ENCODE measurements at regions of chr12 and their contacts with region 1.

Region 1: GRCh38 chr12:53098982-53099651 is 1.6 kb downstream of the IGFBP6 start:
- DNase-seq: peak; percentile 73 to 89 (median 85)
- ATAC-seq: peak; percentile 88
- H3K4me3 ChIP-seq: no peak overlapping the region
- H3K4me3 Mint-ChIP-seq: peak overlapping the region; percentile 43 to 88 (median 80)
- H3K27ac ChIP-seq: no peak overlapping the region
- H3K27ac Mint-ChIP-seq: peak overlapping the region in 6 of 9 donors; percentile 8 to 73 (median 33)
- H3K4me1 ChIP-seq: peaks cover 41 to 46% of the 10 kb centered on the region in 2 donors
- H3K4me1 Mint-ChIP-seq: peaks cover 40 to 52% (median 48%) of the 10 kb centered on the region in 7 donors
- H3K27me3 ChIP-seq: no peaks in the 10 kb centered on the region
- H3K27me3 Mint-ChIP-seq: peaks cover 0 to 37% (median 0%) of the 10 kb centered on the region in 5 donors

Region 2: DNA sequence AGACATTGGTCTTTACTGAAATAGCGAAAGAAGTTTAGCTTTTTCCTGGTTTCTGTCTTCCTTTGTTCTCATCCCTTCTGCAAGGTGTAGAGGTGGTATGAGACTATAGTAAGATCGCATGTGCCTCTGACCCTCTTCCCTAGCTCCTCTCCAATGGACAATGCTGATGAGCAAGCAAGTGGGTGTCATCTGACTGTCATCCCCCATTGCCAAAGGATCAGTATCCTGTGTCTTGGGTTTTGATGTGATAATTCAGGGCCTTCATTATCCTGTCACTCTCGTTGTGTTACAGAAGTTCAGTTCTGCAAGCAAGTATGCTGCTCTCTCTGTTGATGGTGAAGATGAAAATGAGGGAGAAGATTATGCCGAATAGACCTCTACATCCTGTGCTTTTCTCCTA is 59.3 kb before region 1 on chr12:
- CTCF ChIA-PET with region 1: interaction called, 11 read pairs
- POLR2A ChIA-PET with region 1: no interaction called
- intact Hi-C with region 1: loop called in 1 of 2 experiments (anchors 1 kb)
- DNase-seq: no peak
- ATAC-seq: no peak
- H3K4me3 ChIP-seq: no peak overlapping the region
- H3K4me3 Mint-ChIP-seq: no peak overlapping the region
- H3K27ac ChIP-seq: peak overlapping the region; percentile 14
- H3K27ac Mint-ChIP-seq: peak overlapping the region in 4 of 9 donors; percentile 14 to 51 (median 42)
- H3K4me1 ChIP-seq: peaks cover 0 to 6% of the 10 kb centered on the region in 2 donors
- H3K4me1 Mint-ChIP-seq: peaks cover 11 to 21% (median 13%) of the 10 kb centered on the region in 7 donors
- H3K27me3 ChIP-seq: no peaks in the 10 kb centered on the region
- H3K27me3 Mint-ChIP-seq: peaks cover 0 to 1% (median 0%) of the 10 kb centered on the region in 5 donors

Region 3: GRCh38 chr12:53047221-53048042 is 51.7 kb before region 1 on chr12:
- CTCF ChIA-PET with region 1: interaction called, 17 read pairs
- POLR2A ChIA-PET with region 1: interaction called, 4 read pairs
- intact Hi-C with region 1: loop called (anchors 1 to 5 kb)
- DNase-seq: peak; percentile 53 to 86 (median 70)
- ATAC-seq: peak; percentile 91
- H3K4me3 ChIP-seq: peak overlapping the region; percentile 82
- H3K4me3 Mint-ChIP-seq: peak overlapping the region in 9 of 10 donors; percentile 43 to 95 (median 76)
- H3K27ac ChIP-seq: peak overlapping the region; percentile 78
- H3K27ac Mint-ChIP-seq: peak overlapping the region in 6 of 9 donors; percentile 12 to 92 (median 82)
- H3K4me1 ChIP-seq: peaks cover 7 to 9% of the 10 kb centered on the region in 2 donors
- H3K4me1 Mint-ChIP-seq: peaks cover 0 to 24% (median 13%) of the 10 kb centered on the region in 7 donors
- H3K27me3 ChIP-seq: no peaks in the 10 kb centered on the region
- H3K27me3 Mint-ChIP-seq: peaks cover 0 to 13% (median 0%) of the 10 kb centered on the region in 5 donors

Region 4: DNA sequence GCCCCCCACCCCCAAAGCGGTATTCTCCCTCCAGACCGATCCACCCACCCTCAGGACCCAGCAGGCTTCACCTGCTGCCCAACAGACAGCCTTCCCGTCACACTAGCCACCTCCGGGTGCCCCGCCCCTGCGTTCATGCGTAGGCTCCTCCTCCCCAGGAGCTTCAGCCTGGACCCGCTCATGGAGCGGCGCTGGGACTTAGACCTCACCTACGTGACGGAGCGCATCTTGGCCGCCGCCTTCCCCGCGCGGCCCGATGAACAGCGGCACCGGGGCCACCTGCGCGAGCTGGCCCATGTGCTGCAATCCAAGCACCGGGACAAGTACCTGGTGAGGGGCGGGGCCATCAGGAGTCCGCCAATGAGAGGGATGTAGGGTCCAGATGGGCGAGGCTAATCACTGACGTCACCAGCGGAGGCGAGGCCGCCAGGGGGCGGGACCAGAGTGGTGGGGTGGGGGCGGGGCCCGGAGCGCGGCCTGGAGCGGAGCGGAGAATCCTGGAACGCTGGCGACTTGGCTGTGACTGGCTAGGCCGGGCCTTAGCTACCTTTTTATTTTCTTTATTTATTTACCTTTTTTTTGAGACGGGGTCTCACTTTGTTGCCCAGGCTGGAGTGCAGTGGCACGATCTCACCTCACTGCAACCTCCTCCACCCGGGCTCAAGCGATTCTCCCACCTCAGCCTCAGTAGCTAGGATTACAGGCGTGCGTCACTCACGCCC is 44.8 kb before region 1 on chr12:
- CTCF ChIA-PET with region 1: interaction called, 17 read pairs
- POLR2A ChIA-PET with region 1: interaction called, 3 read pairs
- intact Hi-C with region 1: loop called in 1 of 2 experiments (anchors 5 kb)
- DNase-seq: peak; percentile 85 to 94 (median 93)
- ATAC-seq: peak; percentile 98
- H3K4me3 ChIP-seq: peak overlapping the region; percentile 95
- H3K4me3 Mint-ChIP-seq: peak overlapping the region; percentile 89 to 97 (median 94)
- H3K27ac ChIP-seq: peak overlapping the region; percentile 71
- H3K27ac Mint-ChIP-seq: peak overlapping the region; percentile 83 to 96 (median 92)
- H3K4me1 ChIP-seq: peaks cover 6 to 9% of the 10 kb centered on the region in 2 donors
- H3K4me1 Mint-ChIP-seq: peaks cover 8 to 14% (median 11%) of the 10 kb centered on the region in 7 donors
- H3K27me3 ChIP-seq: no peaks in the 10 kb centered on the region
- H3K27me3 Mint-ChIP-seq: no peaks in the 10 kb centered on the region

Region 5: DNA sequence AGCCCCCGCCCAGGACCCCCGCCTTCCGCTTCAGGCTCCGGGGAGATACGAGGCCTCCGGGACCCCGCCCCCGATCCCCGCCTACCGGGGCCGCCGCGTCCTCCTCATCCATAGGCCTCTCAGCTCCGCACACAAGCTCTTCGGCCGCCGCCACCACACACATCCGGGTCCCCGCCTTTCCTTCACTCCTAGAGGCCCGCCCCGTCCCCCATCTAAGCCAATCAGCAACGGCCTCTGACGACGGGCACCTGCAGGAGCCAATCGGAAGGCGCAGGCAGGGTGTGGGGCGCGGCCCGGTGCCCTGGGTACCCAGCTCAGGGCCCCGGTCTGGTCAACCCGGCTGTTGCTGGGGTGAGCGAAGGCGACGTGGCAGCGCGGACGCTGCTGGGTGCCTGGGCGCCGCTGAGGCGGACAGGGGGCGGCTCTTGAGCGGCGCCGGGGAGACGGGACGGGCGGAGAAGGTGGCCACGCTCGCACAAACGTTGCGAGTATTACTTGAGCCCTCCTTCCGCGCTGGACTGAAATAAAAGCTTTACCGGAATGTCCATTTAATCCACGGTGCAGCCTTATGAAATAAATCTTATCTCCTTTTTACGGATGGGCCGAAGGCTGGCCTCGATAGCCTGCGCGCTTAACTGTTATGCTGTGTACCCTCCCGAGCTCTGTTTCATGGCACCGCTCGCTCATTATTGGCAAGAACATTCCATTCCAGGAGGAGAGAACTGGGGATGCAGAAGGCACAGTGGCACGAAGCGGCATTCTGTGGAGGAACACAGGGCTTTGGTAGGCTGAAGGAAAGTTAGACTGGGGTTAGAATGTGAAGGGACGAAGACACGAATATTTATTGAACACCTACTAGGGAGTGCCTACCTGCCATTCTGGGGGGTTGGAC is 19.6 kb before region 1 on chr12 and contains the start of gene SPRYD3:
- CTCF ChIA-PET with region 1: interaction called, 38 read pairs
- POLR2A ChIA-PET with region 1: interaction called, 35 read pairs
- intact Hi-C with region 1: loop called (anchors 1 kb)
- DNase-seq: peak; percentile 96 to 99 (median 97)
- ATAC-seq: peak; percentile 99
- H3K4me3 ChIP-seq: peak within 1 kb of the TSS; percentile 95
- H3K4me3 Mint-ChIP-seq: peak within 1 kb of the TSS; percentile 90 to 98 (median 92)
- H3K27ac ChIP-seq: peak within 1 kb of the TSS; percentile 93
- H3K27ac Mint-ChIP-seq: peak within 1 kb of the TSS; percentile 95 to 98 (median 96)
- H3K4me1 ChIP-seq: peaks cover 10 to 14% of the 10 kb centered on the region in 2 donors
- H3K4me1 Mint-ChIP-seq: peaks cover 26 to 53% (median 40%) of the 10 kb centered on the region in 7 donors
- H3K27me3 ChIP-seq: no peaks in the 10 kb centered on the region
- H3K27me3 Mint-ChIP-seq: peaks cover 0 to 3% (median 0%) of the 10 kb centered on the region in 5 donors
- total RNA-seq, gene SPRYD3: 33.0 to 48.0 (median 36.4) TPM

Region 6: GRCh38 chr12:53113136-53113705 is 14.1 kb after region 1 on chr12:
- CTCF ChIA-PET with region 1: no interaction called
- POLR2A ChIA-PET with region 1: no interaction called
- intact Hi-C with region 1: no loop called
- DNase-seq: no peak
- ATAC-seq: no peak
- H3K4me3 ChIP-seq: no peak overlapping the region
- H3K4me3 Mint-ChIP-seq: no peak overlapping the region
- H3K27ac ChIP-seq: no peak overlapping the region
- H3K27ac Mint-ChIP-seq: no peak overlapping the region
- H3K4me1 ChIP-seq: no peaks in the 10 kb centered on the region
- H3K4me1 Mint-ChIP-seq: no peaks in the 10 kb centered on the region
- H3K27me3 ChIP-seq: no peaks in the 10 kb centered on the region
- H3K27me3 Mint-ChIP-seq: peaks cover 0 to 5% (median 0%) of the 10 kb centered on the region in 5 donors

Region 7: GRCh38 chr12:53190108-53190729 is 91.1 kb after region 1 on chr12:
- CTCF ChIA-PET with region 1: no interaction called
- POLR2A ChIA-PET with region 1: no interaction called
- intact Hi-C with region 1: no loop called
- DNase-seq: peak in 7 of 9 donors; percentile 42 to 57 (median 52)
- ATAC-seq: peak; percentile 85
- H3K4me3 ChIP-seq: no peak overlapping the region
- H3K4me3 Mint-ChIP-seq: peak overlapping the region in 1 of 10 donors; percentile 25
- H3K27ac ChIP-seq: peak overlapping the region; percentile 37
- H3K27ac Mint-ChIP-seq: peak overlapping the region in 8 of 9 donors; percentile 36 to 89 (median 68)
- H3K4me1 ChIP-seq: peaks cover 0 to 11% of the 10 kb centered on the region in 2 donors
- H3K4me1 Mint-ChIP-seq: peaks cover 9 to 55% (median 30%) of the 10 kb centered on the region in 7 donors
- H3K27me3 ChIP-seq: no peaks in the 10 kb centered on the region
- H3K27me3 Mint-ChIP-seq: no peaks in the 10 kb centered on the region

Region 8: GRCh38 chr12:53287741-53288216 is 188.7 kb after region 1 on chr12:
- CTCF ChIA-PET with region 1: no interaction called
- POLR2A ChIA-PET with region 1: no interaction called
- intact Hi-C with region 1: loop called in 1 of 2 experiments (anchors 5 kb)
- DNase-seq: peak; percentile 43 to 76 (median 69)
- ATAC-seq: peak; percentile 94
- H3K4me3 ChIP-seq: no peak overlapping the region
- H3K4me3 Mint-ChIP-seq: no peak overlapping the region
- H3K27ac ChIP-seq: no peak overlapping the region
- H3K27ac Mint-ChIP-seq: peak overlapping the region in 4 of 9 donors; percentile 8 to 86 (median 25)
- H3K4me1 ChIP-seq: no peaks in the 10 kb centered on the region
- H3K4me1 Mint-ChIP-seq: peaks cover 4 to 11% (median 5%) of the 10 kb centered on the region in 7 donors
- H3K27me3 ChIP-seq: no peaks in the 10 kb centered on the region
- H3K27me3 Mint-ChIP-seq: no peaks in the 10 kb centered on the region

Measured in naive thymus-derived CD4-positive, alpha-beta T cell (primary cell).